ENCODE measurements at regions of chr17 and their contacts with region 1.

Region 1: GRCh38 chr17:29807520-29808351 is 122.3 kb downstream of the SSH2 start:
- DNase-seq: no peak

Region 2: DNA sequence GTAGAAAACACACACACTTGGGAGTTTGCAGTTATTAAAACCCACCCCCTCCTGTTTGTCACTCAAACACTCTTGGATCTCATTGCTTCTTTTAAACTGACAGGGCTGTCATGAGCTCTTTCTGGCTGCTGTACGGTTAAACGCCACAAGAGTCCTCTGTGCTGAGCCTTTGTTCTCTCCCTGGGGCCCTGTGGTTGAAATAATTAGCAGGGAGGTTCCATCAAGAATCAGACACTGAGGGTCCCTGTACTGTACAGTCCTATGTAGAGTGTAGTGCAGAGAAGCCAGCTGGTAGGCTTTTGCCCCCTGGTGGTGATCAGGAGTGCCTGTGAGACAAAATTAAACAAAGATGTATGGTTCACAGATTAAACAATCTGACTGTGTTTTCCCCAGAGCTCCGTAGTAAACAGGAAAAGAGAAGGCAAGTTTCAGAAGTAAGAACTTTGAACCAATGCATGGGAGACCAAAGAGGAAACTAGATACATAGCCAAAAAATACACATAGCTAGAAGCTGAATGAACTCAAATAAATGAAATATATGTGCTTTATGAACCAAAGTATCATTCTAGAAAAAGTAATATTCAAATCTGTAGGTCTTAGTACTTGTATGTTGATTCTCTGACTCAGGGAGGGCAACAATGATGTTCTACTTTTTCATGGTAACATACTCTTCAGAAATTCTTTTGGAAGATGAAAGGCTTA is 123.6 kb after region 1 on chr17:
- intact Hi-C with region 1: loop called (anchors 5 kb)
- DNase-seq: peak; percentile 83

Region 3: GRCh38 chr17:30084788-30085187 is 277.1 kb after region 1 on chr17:
- intact Hi-C with region 1: loop called in 1 of 2 experiments (anchors 10 kb)
- DNase-seq: no peak

Measured in posterior vena cava (tissue), 2 donors.